ENCODE measurements at regions of chr1 and their contacts with region 1.

Region 1: GRCh38 chr1:204074274-204075138 is 1.6 kb downstream of the SOX13 start:
- DNase-seq: no peak
- ATAC-seq: peak; percentile 27
- H3K4me3 ChIP-seq: peak overlapping the region; percentile 80 to 84
- H3K27ac ChIP-seq: peak overlapping the region; percentile 72
- H3K4me1 ChIP-seq: peaks cover 38% of the 10 kb centered on the region
- H3K27me3 ChIP-seq: no peaks in the 10 kb centered on the region
- CTCF ChIP-seq: no peak

Region 2: GRCh38 chr1:204123376-204123775 is 48.9 kb after region 1 on chr1:
- CTCF ChIA-PET with region 1: interaction called, 3 read pairs
- POLR2A ChIA-PET with region 1: interaction called, 3 read pairs
- in situ Hi-C with region 1: no loop called
- intact Hi-C with region 1: loop called (anchors 5 kb)
- DNase-seq: no peak
- ATAC-seq: no peak
- H3K4me3 ChIP-seq: no peak overlapping the region
- H3K27ac ChIP-seq: no peak overlapping the region
- H3K4me1 ChIP-seq: peaks cover 5% of the 10 kb centered on the region
- H3K27me3 ChIP-seq: no peaks in the 10 kb centered on the region
- CTCF ChIP-seq: no peak

Region 3: DNA sequence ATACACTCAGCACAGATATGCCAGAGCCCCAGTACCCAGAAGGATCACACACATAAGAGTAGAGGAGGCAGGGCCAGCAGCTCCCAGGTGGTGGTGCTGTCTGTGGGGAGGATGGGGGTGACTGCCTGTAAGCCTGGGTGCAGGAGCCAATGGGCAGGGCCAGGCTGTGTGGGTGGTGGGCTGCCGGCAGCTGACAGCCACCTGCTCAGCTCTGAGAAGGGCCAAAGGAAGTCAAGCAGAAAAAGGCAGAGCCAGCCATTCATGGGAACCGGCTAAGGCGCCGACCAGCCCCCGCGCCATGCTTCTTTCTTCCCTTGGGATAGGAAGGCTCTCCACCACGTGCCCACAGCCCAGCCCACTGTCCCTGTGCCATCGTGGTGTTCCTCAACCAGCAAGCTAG is 406.0 kb after region 1 on chr1:
- CTCF ChIA-PET with region 1: no interaction called
- POLR2A ChIA-PET with region 1: no interaction called
- in situ Hi-C with region 1: no loop called
- intact Hi-C with region 1: no loop called
- DNase-seq: no peak
- ATAC-seq: peak; percentile 27; the same call in 1 of the 2 replicates
- H3K4me3 ChIP-seq: no peak overlapping the region
- H3K27ac ChIP-seq: no peak overlapping the region
- H3K4me1 ChIP-seq: peaks cover 3% of the 10 kb centered on the region
- H3K27me3 ChIP-seq: no peaks in the 10 kb centered on the region
- CTCF ChIP-seq: no peak